H1 (cell line): ENCODE measurements at regions of chr10 and their contacts with region 1.

Region 1: DNA sequence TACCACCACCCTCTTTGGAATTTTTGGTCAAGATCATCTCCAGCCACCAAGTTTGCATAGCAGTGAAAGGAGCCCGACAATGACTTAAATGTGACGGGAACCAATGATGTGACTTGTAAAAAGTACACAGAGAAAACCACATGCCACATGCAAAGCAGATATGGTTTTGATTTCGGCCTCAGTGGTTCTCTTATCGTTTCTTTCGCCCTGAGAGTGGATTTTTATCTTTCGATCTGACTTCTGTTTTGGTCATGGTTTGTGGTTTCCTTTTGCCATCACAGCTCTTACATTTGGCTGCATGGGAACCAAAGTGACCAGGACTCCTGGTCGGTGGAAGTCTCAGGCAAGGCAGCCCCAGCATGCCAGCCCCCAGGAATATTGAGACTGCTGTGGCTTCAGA is 31.5 kb downstream of the TCF7L2 start:
- DNase-seq: no peak
- H3K4me3 ChIP-seq: no peak overlapping the region
- H3K27ac ChIP-seq: no peak overlapping the region
- H3K4me1 ChIP-seq: peaks cover 8 to 38% (median 17%) of the 10 kb centered on the region in 4 experiments
- H3K27me3 ChIP-seq: no peaks in the 10 kb centered on the region
- CTCF ChIP-seq: no peak
- EP300 ChIP-seq: no peak
- POLR2A ChIP-seq: no peak
- RAD21 ChIP-seq: no peak

Region 2: DNA sequence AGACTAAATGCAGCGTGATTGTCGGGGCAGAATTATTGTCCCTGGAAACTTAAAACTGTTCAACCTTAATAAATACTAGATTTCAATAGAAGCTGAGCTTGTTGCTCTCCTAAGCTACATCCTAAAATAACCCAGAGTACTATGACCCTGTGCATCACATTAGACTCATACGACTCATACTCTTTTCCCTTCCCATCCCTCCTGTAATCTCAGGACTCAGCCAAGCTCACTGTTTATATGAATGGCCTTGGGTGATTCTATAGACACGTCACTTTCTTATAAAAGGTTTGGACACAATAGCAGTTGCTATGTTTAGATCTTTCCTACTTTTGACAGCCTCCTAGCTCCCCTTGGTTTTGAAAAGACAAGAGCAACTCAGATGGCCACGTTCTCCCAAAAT is 14.4 kb before region 1 on chr10:
- CTCF ChIA-PET with region 1: interaction called, 10 read pairs
- POLR2A ChIA-PET with region 1: interaction called, 13 read pairs
- DNase-seq: no peak
- H3K4me3 ChIP-seq: no peak overlapping the region
- H3K27ac ChIP-seq: no peak overlapping the region
- H3K4me1 ChIP-seq: peaks cover under 1 to 14% (median 3%) of the 10 kb centered on the region in 4 experiments; a peak in 4 of 7 replicates
- H3K27me3 ChIP-seq: no peaks in the 10 kb centered on the region
- CTCF ChIP-seq: no peak
- EP300 ChIP-seq: no peak
- POLR2A ChIP-seq: no peak
- RAD21 ChIP-seq: no peak

Region 3: DNA sequence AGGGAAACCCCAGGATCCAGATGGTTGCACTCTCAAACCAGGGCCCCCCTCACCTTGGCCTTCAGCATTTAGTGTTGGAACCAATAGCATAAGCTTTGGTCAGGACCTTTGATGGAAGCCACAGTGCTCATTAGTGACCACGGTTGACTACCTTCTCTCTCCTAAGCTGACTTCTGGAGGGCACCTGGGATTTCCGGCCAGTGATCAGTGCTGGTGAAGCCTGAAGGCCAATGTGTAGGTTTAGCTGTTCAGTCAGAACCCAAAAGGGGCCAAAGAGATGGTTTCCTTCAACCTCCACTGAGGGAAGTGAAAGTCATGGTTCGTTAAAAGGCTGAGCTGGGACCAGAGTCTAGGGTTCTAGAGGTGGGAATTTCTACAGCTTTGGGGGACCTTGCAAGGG is 14.9 kb after region 1 on chr10:
- CTCF ChIA-PET with region 1: interaction called, 3 read pairs
- POLR2A ChIA-PET with region 1: interaction called, 11 read pairs
- DNase-seq: no peak
- H3K4me3 ChIP-seq: no peak overlapping the region
- H3K27ac ChIP-seq: no peak overlapping the region
- H3K4me1 ChIP-seq: peaks cover 0 to 10% (median 3%) of the 10 kb centered on the region in 4 experiments; a peak in 3 of 7 replicates
- H3K27me3 ChIP-seq: no peaks in the 10 kb centered on the region
- CTCF ChIP-seq: no peak
- EP300 ChIP-seq: no peak
- POLR2A ChIP-seq: no peak
- RAD21 ChIP-seq: no peak